ENCODE measurements at regions of chr10 and their contacts with region 1.

Region 1: DNA sequence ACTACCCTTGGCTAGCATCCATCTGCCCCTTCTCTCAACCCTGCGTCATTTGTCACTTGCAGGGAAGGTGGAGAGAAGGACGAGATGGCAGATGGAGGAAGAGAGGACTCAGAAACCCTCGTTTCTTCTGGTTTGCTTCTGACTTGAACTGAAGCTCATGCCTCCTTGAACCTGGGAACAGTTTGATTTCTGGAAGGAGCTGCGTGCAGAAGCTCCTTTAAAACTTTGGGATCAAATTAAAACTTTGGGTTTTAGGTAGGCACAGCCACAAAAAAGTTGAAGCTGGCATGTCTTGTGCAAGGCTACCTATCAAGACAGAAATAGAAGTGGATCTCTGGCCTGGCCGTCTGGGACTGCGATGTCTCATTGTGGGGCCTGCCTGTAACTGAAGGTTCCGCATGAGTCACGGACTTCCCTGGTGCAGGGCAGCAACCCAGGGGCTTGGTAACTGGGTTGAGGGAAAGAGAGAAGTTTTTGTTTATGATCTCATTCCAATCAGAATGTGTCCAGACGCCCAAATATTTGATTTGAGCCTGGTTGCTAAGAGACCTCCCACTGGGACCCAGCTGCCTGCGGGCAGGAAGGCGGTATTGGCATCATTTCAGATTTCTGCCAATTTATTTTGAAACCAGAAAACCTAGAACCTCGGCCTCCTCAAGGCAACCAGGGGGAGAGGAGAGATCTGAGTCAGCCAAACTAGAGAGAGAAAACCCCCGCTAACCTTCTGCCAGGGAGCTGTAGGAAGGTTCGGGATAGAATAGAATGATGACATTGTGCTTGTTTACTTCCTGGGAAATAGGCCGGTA is 15.8 kb upstream of the CAMK1D start:
- DNase-seq: peak; percentile 98
- H3K4me3 ChIP-seq: peak overlapping the region in 1 of 3 experiments; percentile 13
- H3K27ac ChIP-seq: peak overlapping the region; percentile 94
- H3K4me1 ChIP-seq: peaks cover 18% of the 10 kb centered on the region
- H3K27me3 ChIP-seq: no peaks in the 10 kb centered on the region
- CTCF ChIP-seq: no peak

Region 2: GRCh38 chr10:12271210-12271540 is 62.4 kb before region 1 on chr10:
- CTCF ChIA-PET with region 1: interaction called, 3 read pairs
- dilution Hi-C with region 1: no loop called
- in situ Hi-C with region 1: loop called in 1 of 2 experiments (anchors 10 kb)
- intact Hi-C with region 1: loop called (anchors 5 kb)
- DNase-seq: peak; percentile 79
- H3K4me3 ChIP-seq: no peak overlapping the region
- H3K27ac ChIP-seq: no peak overlapping the region
- H3K4me1 ChIP-seq: peaks cover 4% of the 10 kb centered on the region
- H3K27me3 ChIP-seq: no peaks in the 10 kb centered on the region
- CTCF ChIP-seq: no peak

Region 3: DNA sequence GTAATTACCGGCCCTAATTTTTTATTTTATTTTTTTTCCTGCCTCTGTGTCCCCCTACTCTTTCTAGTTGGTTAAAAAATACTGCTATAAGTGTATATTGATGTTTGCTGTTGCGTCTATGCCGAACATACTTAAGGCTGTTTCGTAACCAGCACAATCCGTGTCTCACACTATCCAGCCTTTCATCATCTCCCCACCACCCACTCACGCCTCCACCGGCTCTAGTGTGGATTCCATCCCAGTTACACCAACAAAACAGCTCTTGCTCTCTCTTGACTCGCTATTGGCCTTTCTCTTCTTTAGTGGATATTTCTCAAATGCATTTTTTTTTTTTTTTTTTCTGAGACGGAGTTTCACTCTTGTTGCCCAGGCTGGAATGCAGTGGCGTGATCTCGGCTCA is 54.3 kb before region 1 on chr10:
- CTCF ChIA-PET with region 1: interaction called, 3 read pairs
- dilution Hi-C with region 1: no loop called
- in situ Hi-C with region 1: loop called in 1 of 2 experiments (anchors 10 kb)
- intact Hi-C with region 1: loop called (anchors 5 kb)
- DNase-seq: no peak
- H3K4me3 ChIP-seq: no peak overlapping the region
- H3K27ac ChIP-seq: no peak overlapping the region
- H3K4me1 ChIP-seq: no peaks in the 10 kb centered on the region
- H3K27me3 ChIP-seq: no peaks in the 10 kb centered on the region
- CTCF ChIP-seq: no peak

Region 4: DNA sequence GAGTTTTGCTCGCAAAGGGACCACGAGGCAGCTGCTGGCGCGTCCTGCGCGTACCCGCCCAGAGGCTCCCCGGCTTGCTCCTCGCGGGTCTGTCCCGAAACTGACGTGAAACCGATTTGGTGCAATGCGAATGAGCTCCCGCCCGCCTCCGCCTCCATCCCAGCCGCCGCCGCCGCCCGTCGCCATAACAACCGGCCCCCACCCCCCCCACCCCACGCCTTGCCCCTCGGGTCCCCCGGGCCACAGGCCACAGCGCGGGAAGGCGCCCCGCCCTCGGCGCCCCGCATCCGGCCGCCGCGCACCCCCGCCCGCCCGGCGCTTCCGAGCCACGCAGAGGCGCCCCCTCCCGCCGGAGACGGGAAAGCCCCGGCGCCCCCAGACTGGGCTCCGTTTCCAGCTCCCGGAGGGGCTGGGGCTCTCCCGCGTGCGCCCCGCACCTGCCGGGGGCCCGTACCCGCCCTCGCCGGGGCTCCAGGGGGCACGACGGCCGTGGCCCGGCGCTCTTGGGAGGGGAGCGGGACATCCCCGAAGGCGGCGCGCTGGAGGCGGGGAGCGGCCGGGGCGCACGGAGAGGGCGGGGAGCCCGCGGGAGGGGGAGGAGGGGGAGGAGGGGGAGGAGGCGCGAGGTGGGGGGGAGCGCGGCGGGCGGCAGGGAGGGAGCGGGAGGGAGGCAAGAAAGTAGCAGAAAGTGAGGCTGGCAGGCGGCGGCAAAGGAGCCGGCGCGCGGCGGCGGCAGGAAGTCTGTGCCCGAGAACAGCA is 15.5 kb after region 1 on chr10 and contains the start of gene CAMK1D:
- CTCF ChIA-PET with region 1: no interaction called
- dilution Hi-C with region 1: no loop called
- in situ Hi-C with region 1: no loop called
- intact Hi-C with region 1: loop called (anchors 2 kb)
- DNase-seq: peak; percentile 62
- H3K4me3 ChIP-seq: peak within 1 kb of the TSS; percentile 9 to 58 (median 56)
- H3K27ac ChIP-seq: no peak within 1 kb of the TSS
- H3K4me1 ChIP-seq: peaks cover 11% of the 10 kb centered on the region
- H3K27me3 ChIP-seq: no peaks in the 10 kb centered on the region
- CTCF ChIP-seq: no peak
- total RNA-seq, gene CAMK1D: 0.50 to 1.5 TPM

Region 5: GRCh38 chr10:13099666-13100348 is 766.2 kb after region 1 on chr10 and contains the start of gene OPTN:
- CTCF ChIA-PET with region 1: no interaction called
- dilution Hi-C with region 1: no loop called
- in situ Hi-C with region 1: no loop called
- intact Hi-C with region 1: loop called (anchors 10 kb)
- DNase-seq: peak; percentile 82
- H3K4me3 ChIP-seq: peak within 1 kb of the TSS; percentile 69 to 95 (median 82)
- H3K27ac ChIP-seq: peak within 1 kb of the TSS; percentile 74
- H3K4me1 ChIP-seq: peaks cover 6% of the 10 kb centered on the region
- H3K27me3 ChIP-seq: no peaks in the 10 kb centered on the region
- CTCF ChIP-seq: peak; percentile 76 to 89
- total RNA-seq, gene OPTN: 60.0 to 142 TPM